Ascending aorta (tissue), 2 donors: ENCODE measurements at regions of chr10 and their contacts with region 1.

Region 1: GRCh38 chr10:61903221-61903927 is 1.9 kb downstream of the ARID5B start:
- DNase-seq: peak; percentile 18 to 80
- H3K4me3 ChIP-seq: peak overlapping the region; percentile 84 to 89
- H3K27ac ChIP-seq: peak overlapping the region; percentile 99
- H3K4me1 ChIP-seq: peaks cover 0 to 12% of the 10 kb centered on the region in 2 donors
- H3K27me3 ChIP-seq: no peaks in the 10 kb centered on the region
- CTCF ChIP-seq: peak in 2 of 3 experiments; percentile 6 to 35

Region 2: DNA sequence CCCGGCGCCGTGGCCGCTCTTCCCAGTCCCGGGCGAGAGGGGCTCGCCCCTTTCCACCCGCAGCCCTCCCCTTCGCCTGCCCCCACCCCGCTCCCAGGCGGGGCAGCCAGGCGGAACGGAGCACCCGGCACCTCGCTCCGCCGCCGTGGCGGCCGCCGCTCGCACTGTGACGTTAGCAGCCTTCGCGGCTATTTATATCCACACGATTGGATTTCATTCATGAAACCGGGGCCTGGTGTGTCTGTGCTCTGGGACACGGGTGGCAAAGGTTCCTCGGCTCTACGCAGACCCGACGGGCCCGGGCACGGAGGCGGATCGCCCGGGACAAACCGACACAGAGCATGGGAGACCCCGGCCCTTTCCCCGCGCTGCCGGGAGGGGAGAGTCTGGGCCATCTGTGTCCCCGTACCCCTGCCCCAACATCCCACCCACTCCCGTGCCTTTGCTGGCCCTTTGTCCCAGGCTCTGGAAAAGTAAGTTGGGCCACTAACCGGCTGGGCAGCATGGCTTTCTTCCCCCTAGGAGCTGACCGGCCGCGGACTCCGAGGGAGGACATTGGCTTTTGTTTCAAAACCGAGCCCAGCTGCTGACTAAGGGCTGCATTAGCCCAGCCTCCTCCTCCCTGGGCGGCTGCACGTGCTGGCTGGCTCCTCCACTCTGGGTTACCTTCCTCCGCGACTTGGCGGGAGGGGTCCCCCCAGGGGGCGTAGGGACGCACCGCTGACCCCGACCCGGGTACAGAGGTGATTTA is 959.0 kb before region 1 on chr10 and contains the start of gene RHOBTB1:
- intact Hi-C with region 1: loop called (anchors 10 kb)
- DNase-seq: peak; percentile 23 to 90
- H3K4me3 ChIP-seq: peak within 1 kb of the TSS; percentile 88 to 94
- H3K27ac ChIP-seq: peak within 1 kb of the TSS; percentile 100
- H3K4me1 ChIP-seq: peaks cover 0 to 11% of the 10 kb centered on the region in 2 donors
- H3K27me3 ChIP-seq: no peaks in the 10 kb centered on the region
- CTCF ChIP-seq: no peak
- total RNA-seq, gene RHOBTB1: 13.6 TPM

Region 3: GRCh38 chr10:61937631-61938351 is 34.4 kb after region 1 on chr10:
- intact Hi-C with region 1: loop called (anchors 2 kb)
- DNase-seq: no peak
- H3K4me3 ChIP-seq: peak overlapping the region; percentile 21 to 34
- H3K27ac ChIP-seq: peak overlapping the region; percentile 73 to 80
- H3K4me1 ChIP-seq: peaks cover 6 to 53% of the 10 kb centered on the region in 2 donors
- H3K27me3 ChIP-seq: no peaks in the 10 kb centered on the region
- CTCF ChIP-seq: no peak

Region 4: DNA sequence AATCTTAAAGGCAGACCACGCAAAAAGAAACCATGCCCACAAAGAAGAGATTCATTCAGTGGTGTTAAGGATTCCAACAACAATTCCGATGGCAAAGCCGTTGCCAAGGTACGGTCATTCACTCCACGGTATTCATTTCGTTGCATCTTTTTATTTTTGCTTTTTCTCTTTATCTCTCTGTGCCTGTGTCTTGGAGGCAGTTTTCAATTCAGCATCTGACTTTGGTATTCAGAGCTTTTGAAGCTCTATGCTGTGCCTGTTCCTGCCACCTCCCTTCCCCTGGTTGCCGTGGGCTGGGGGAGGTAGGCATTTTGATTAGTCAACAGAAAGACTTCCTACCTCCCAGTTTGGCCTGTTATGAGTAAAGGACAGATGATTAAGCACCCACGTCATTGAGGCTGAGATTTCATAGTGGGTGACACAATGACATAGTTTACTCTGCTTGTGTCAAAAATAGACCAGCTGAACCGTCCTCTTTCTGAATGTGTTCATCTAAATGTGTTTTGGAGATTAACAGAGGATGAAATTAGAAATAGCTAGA is 147.6 kb after region 1 on chr10:
- intact Hi-C with region 1: loop called (anchors 2 kb)
- DNase-seq: peak; percentile 60 to 92
- H3K4me3 ChIP-seq: peak overlapping the region; percentile 56 to 78
- H3K27ac ChIP-seq: peak overlapping the region; percentile 95 to 97
- H3K4me1 ChIP-seq: peaks cover 13 to 57% of the 10 kb centered on the region in 2 donors
- H3K27me3 ChIP-seq: no peaks in the 10 kb centered on the region
- CTCF ChIP-seq: no peak

Region 5: DNA sequence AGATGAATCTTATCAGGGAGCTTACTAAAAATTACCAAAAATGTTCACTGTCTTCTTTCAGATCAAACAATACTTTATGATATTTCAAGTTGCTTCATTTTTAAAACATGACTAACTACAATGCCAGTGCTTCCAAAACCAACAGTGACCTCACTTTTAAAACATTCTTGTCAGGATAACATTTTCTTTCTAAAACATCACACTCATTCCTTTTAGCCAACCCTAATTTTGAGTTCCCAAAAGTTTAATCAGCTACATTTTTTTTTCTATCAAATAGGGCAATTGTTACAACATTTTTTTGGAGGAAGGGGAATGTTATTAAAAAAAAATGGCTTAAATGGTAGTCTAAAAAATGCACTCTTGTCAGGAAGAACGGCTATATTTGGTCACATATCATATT is 328.0 kb after region 1 on chr10:
- intact Hi-C with region 1: loop called (anchors 5 kb)
- DNase-seq: no peak
- H3K4me3 ChIP-seq: no peak overlapping the region
- H3K27ac ChIP-seq: peak overlapping the region; percentile 28 to 48
- H3K4me1 ChIP-seq: peaks cover 0 to 30% of the 10 kb centered on the region in 2 donors
- H3K27me3 ChIP-seq: no peaks in the 10 kb centered on the region
- CTCF ChIP-seq: no peak